ENCODE measurements at regions of chr11 and their contacts with region 1.

Region 1: DNA sequence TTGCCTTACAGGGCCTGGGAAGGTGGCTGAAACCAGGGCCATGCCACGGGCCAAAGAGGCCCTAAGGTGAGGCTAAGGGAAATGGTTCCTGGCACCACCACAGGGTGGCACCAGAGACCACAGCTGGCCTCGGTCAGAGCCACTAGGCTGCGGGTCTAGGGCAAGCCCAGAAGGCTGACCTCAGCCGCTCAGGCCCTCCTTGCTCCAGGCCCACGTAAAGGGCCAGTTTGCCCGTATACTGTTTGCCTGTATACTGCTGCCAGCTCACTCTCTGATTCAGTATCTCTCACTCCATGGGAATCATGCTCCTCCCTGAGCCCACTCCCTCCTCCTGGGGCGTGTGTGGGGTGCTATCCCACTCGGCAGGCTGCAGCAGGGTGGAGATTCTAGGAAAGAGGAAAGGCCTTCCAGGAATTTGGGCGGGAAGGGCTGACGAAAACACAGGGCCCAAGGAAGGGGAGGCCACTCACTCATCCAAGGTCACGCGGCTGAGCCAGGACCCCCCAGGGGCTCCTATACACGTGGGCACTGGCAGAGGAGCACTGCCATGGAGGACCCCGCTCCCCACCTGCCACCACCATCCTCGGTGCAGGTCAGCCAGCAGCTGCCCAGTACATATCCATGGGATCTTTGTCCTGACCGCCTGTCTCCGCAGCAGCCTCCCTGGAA is 62.4 kb downstream of the NECTIN1 start:
- DNase-seq: peak; percentile 57 to 94 (median 77)
- ATAC-seq: peak; percentile 98
- H3K4me3 ChIP-seq: no peak overlapping the region
- H3K27ac ChIP-seq: no peak overlapping the region
- H3K4me1 ChIP-seq: peaks cover 7 to 11% of the 10 kb centered on the region in 2 donors
- H3K27me3 ChIP-seq: no peaks in the 10 kb centered on the region
- CTCF ChIP-seq: peak; percentile 93 to 94

Region 2: GRCh38 chr11:119560291-119560690 is 106.3 kb before region 1 on chr11:
- intact Hi-C with region 1: no loop called
- DNase-seq: no peak
- ATAC-seq: no peak
- H3K4me3 ChIP-seq: no peak overlapping the region
- H3K27ac ChIP-seq: no peak overlapping the region
- H3K4me1 ChIP-seq: no peaks in the 10 kb centered on the region
- H3K27me3 ChIP-seq: peaks cover 0 to 4% of the 10 kb centered on the region in 2 donors
- CTCF ChIP-seq: no peak

Region 3: DNA sequence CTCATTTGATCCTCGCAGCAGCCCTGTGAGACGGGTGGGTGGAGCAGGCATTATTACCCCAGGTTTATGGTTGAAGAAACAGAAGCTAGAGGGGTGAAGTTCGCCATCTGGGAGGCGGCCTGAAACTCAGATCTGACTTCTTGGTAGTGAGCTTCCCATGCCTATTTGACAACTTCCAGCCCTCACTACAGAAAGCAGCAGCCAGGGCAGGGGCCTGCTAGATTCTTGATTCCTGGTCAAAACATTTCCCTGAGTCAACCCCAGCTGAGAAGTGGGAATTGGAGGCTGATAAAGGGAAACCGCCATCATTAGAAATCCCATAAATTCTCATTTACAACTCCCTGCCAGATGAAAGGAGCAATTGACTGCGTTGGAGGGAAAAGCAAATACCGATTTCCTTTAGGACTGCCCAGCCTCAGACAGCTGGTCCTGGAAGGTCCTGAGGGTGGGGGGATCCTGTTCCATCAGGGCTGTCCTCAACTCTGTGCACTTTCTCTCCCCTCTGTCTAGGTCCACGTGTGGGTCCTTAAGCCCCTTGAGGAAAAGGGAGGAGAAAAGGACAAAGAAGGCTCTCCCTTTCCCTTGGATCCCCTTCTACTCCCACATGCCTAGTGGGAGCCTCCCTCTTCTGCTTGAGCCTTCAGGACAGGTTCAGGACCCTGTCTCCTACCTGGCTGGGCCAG is 72.6 kb after region 1 on chr11:
- intact Hi-C with region 1: loop called in 1 of 2 experiments (anchors 5 kb)
- DNase-seq: no peak
- ATAC-seq: no peak
- H3K4me3 ChIP-seq: no peak overlapping the region
- H3K27ac ChIP-seq: no peak overlapping the region
- H3K4me1 ChIP-seq: peaks cover 0 to 10% of the 10 kb centered on the region in 2 donors
- H3K27me3 ChIP-seq: peaks cover 13 to 45% of the 10 kb centered on the region in 2 donors
- CTCF ChIP-seq: no peak

Region 4: DNA sequence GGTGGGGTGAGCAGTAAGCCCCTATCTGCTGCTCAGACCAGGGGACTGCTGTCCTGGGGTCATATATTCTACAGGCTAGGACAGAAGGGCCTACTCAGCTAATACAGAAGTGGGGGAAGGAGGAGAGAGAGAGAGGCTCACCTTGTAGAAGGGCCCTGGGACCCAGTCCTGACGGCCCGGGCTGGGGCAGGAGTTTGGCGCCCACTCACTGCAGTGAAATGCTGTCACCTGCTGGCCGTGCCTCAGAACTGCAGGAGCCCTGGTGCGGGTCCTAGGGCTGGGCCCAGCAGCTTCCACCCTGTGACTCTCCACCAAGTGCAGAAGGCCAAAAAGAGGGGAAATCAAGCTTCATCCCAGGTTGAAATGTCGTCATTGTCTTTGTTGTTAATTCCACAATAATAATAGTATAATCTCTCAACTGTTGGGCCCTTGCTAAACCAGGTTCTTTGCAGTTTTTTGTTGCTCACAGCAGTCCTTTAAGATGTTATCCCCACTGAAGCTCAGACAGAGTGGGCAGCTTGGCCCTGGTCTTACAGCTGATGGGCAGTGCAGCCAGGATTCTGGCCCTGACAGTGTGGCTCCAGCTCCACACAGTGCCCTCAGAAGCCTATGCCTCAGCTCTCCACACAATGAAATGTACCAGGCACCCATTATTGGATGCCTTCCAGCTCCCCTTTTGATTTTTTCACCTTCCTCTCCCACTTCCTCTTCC is 441.7 kb after region 1 on chr11:
- intact Hi-C with region 1: loop called in 1 of 2 experiments (anchors 5 kb)
- DNase-seq: peak; percentile 42 to 89 (median 60)
- ATAC-seq: peak; percentile 97
- H3K4me3 ChIP-seq: no peak overlapping the region
- H3K27ac ChIP-seq: no peak overlapping the region
- H3K4me1 ChIP-seq: no peaks in the 10 kb centered on the region
- H3K27me3 ChIP-seq: peaks cover 0 to 28% of the 10 kb centered on the region in 2 donors
- CTCF ChIP-seq: peak; percentile 97 to 100